GM12878 (cell line): ENCODE measurements at regions of chr17 and their contacts with region 1.

Region 1: GRCh38 chr17:2054512-2055291 is at the start of gene HIC1:
- DNase-seq: no peak
- ATAC-seq: peak; percentile 70
- H3K4me3 ChIP-seq: peak within 1 kb of the TSS; percentile 95
- H3K27ac ChIP-seq: peak within 1 kb of the TSS; percentile 84
- H3K4me1 ChIP-seq: peaks cover 14% of the 10 kb centered on the region
- H3K27me3 ChIP-seq: peaks cover 2% of the 10 kb centered on the region in 2 experiments; a peak in 3 of 4 replicates
- CTCF ChIP-seq: peak; percentile 74 to 96 (median 88); a peak in 5 of 6 replicates
- EP300 ChIP-seq: 0 out of 4 replicates have a peak, but pooled peaks of 1 of the 2 experiments have one; percentile 8
- POLR2A ChIP-seq: peak; percentile 94
- RAD21 ChIP-seq: peak; percentile 87
- polyA plus RNA-seq, gene HIC1: 0.11 to 0.57 TPM

Region 2: GRCh38 chr17:2064980-2065785 is 10.5 kb after region 1 on chr17:
- CTCF ChIA-PET with region 1: interaction called, 77 read pairs
- POLR2A ChIA-PET with region 1: interaction called, 7 read pairs
- RAD21 ChIA-PET with region 1: interaction called, 21 read pairs
- SMC1A ChIA-PET with region 1: interaction called, 24 read pairs
- in situ Hi-C with region 1: no loop called
- intact Hi-C with region 1: no loop called
- DNase-seq: no peak
- ATAC-seq: peak; percentile 72
- H3K4me3 ChIP-seq: no peak overlapping the region
- H3K27ac ChIP-seq: peak overlapping the region; percentile 34
- H3K4me1 ChIP-seq: peaks cover 47% of the 10 kb centered on the region
- H3K27me3 ChIP-seq: no peaks in the 10 kb centered on the region
- CTCF ChIP-seq: peak; percentile 44 to 61 (median 50)
- EP300 ChIP-seq: no peak
- POLR2A ChIP-seq: peak; percentile 73; the same call in 1 of the 2 replicates
- RAD21 ChIP-seq: peak; percentile 61

Region 3: DNA sequence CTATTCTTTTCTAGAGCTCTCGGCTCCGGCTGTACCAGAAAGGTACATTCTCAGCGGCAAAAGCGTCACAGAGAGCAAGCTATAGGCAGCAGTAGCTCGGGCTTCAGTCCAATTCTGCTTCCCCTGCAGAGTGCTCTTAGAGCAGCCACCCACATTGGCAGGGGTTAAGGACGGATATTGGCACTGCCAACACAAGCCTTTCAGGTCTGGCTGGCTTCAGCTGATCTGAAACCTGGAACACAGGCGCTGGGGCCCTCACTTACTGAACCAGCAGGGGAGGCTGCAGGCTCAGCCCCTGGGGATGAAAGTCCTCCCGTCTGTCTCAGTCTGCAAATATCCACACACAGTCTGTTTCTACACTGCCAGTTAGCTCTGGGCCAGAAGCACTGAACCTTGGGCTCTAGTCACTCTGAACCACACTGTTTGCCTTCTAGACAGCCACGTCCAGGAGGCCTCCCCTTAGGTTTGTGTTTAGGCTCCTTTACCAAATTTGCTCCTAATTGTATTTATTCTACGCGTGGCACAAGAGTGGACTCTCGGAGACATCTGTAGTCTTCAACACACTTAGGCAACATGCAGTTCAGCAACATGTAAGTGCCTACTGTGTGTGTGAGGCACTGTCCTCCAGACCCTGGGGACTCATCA is 40.3 kb after region 1 on chr17:
- CTCF ChIA-PET with region 1: interaction called, 106 read pairs
- POLR2A ChIA-PET with region 1: interaction called, 19 read pairs
- RAD21 ChIA-PET with region 1: interaction called, 160 read pairs
- SMC1A ChIA-PET with region 1: interaction called, 45 read pairs
- in situ Hi-C with region 1: no loop called
- intact Hi-C with region 1: loop called (anchors 5 kb)
- DNase-seq: no peak
- ATAC-seq: peak; percentile 43
- H3K4me3 ChIP-seq: no peak overlapping the region
- H3K27ac ChIP-seq: no peak overlapping the region
- H3K4me1 ChIP-seq: peaks cover 26% of the 10 kb centered on the region
- H3K27me3 ChIP-seq: no peaks in the 10 kb centered on the region
- CTCF ChIP-seq: peak; percentile 36 to 68 (median 58); a peak in 5 of 6 replicates
- EP300 ChIP-seq: no peak
- POLR2A ChIP-seq: no peak
- RAD21 ChIP-seq: peak; percentile 79

Region 4: GRCh38 chr17:2222901-2223616 is 168.4 kb after region 1 on chr17:
- CTCF ChIA-PET with region 1: interaction called, 6 read pairs
- POLR2A ChIA-PET with region 1: interaction called, 19 read pairs
- RAD21 ChIA-PET with region 1: interaction called, 11 read pairs
- SMC1A ChIA-PET with region 1: interaction called, 13 read pairs
- in situ Hi-C with region 1: no loop called
- intact Hi-C with region 1: no loop called
- DNase-seq: peak; percentile 81
- ATAC-seq: peak; percentile 95
- H3K4me3 ChIP-seq: peak overlapping the region; percentile 29; the same call in 1 of the 2 replicates
- H3K27ac ChIP-seq: peak overlapping the region; percentile 87
- H3K4me1 ChIP-seq: peaks cover 30% of the 10 kb centered on the region
- H3K27me3 ChIP-seq: no peaks in the 10 kb centered on the region
- CTCF ChIP-seq: no peak
- EP300 ChIP-seq: peak; percentile 69 to 88
- POLR2A ChIP-seq: peak; percentile 13; the same call in 1 of the 2 replicates
- RAD21 ChIP-seq: 0 out of 2 replicates have a peak, but pooled peaks have one; percentile 8

Region 5: GRCh38 chr17:2259769-2260536 is 205.3 kb after region 1 on chr17:
- CTCF ChIA-PET with region 1: interaction called, 16 read pairs
- POLR2A ChIA-PET with region 1: interaction called, 4 read pairs
- RAD21 ChIA-PET with region 1: interaction called, 34 read pairs
- SMC1A ChIA-PET with region 1: interaction called, 6 read pairs
- in situ Hi-C with region 1: no loop called
- intact Hi-C with region 1: no loop called
- DNase-seq: peak; percentile 85
- ATAC-seq: peak; percentile 91
- H3K4me3 ChIP-seq: peak overlapping the region; percentile 44; the same call in 1 of the 2 replicates
- H3K27ac ChIP-seq: peak overlapping the region; percentile 99
- H3K4me1 ChIP-seq: peaks cover 64% of the 10 kb centered on the region
- H3K27me3 ChIP-seq: no peaks in the 10 kb centered on the region
- CTCF ChIP-seq: no peak
- EP300 ChIP-seq: peak; percentile 67 to 80
- POLR2A ChIP-seq: peak; percentile 61
- RAD21 ChIP-seq: no peak

Region 6: GRCh38 chr17:2336215-2336851 is 281.6 kb after region 1 on chr17 and contains the start of gene TSR1:
- CTCF ChIA-PET with region 1: interaction called, 4 read pairs
- POLR2A ChIA-PET with region 1: interaction called, 3 read pairs
- RAD21 ChIA-PET with region 1: interaction called, 10 read pairs
- SMC1A ChIA-PET with region 1: interaction called, 4 read pairs
- in situ Hi-C with region 1: no loop called
- intact Hi-C with region 1: loop called (anchors 5 kb)
- DNase-seq: peak; percentile 55
- ATAC-seq: peak; percentile 94
- H3K4me3 ChIP-seq: peak within 1 kb of the TSS; percentile 92
- H3K27ac ChIP-seq: peak within 1 kb of the TSS; percentile 86
- H3K4me1 ChIP-seq: peaks cover 5% of the 10 kb centered on the region
- H3K27me3 ChIP-seq: no peaks in the 10 kb centered on the region
- CTCF ChIP-seq: peak in 2 of 3 experiments; percentile 29 to 45; a peak in 2 of 6 replicates
- EP300 ChIP-seq: no peak
- POLR2A ChIP-seq: peak; percentile 94
- RAD21 ChIP-seq: no peak
- polyA plus RNA-seq, gene TSR1: 14.7 to 21.9 TPM